AG04449 (cell line): ENCODE measurements at regions of chr15 and their contacts with region 1.

Region 1: GRCh38 chr15:39586387-39587171 is 5.7 kb downstream of the THBS1 start:
- DNase-seq: peak; percentile 63
- H3K4me3 ChIP-seq: peak overlapping the region; percentile 95
- CTCF ChIP-seq: no peak

Region 2: DNA sequence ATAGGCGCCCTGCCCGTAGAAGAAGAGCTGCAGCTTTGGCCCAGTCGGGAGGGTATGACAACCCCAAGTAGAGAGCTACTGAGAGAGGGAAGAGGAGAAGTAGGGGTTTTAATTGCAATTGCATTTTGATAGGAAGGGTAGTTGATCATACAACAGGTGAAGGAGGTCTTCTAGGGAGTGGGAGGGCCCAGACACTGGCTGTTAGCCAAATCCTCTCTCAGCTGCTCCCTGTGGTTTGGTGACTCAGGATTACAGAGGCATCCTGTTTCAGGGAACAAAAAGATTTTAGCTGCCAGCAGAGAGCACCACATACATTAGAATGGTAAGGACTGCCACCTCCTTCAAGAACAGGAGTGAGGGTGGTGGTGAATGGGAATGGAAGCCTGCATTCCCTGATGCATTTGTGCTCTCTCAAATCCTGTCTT is 414.6 kb before region 1 on chr15:
- CTCF ChIA-PET with region 1: interaction called, 9 read pairs
- POLR2A ChIA-PET with region 1: interaction called, 59 read pairs
- DNase-seq: peak; percentile 90
- H3K4me3 ChIP-seq: no peak overlapping the region
- CTCF ChIP-seq: peak; percentile 44

Region 3: DNA sequence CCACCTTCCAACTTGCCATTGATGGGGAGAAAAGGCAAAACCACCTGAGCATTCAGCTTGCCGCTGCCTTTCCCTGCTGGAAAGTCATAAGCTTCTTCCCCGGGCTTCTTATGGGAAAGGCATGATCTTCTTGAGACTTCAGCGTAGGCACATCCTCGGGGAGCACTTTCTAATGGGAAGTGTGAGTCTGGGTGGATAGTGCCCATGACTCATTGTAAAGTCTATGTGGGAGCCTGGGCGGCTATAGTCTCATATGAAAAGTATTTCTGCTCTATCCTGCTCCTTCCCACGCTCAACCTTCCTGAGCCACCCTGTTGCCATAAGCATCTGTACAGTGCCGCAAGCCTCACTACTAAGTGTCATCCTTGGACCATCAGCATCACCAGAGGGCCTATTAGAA is 315.6 kb before region 1 on chr15:
- CTCF ChIA-PET with region 1: no interaction called
- POLR2A ChIA-PET with region 1: interaction called, 40 read pairs
- DNase-seq: peak; percentile 97
- H3K4me3 ChIP-seq: no peak overlapping the region
- CTCF ChIP-seq: no peak

Region 4: GRCh38 chr15:39301589-39301999 is 285.0 kb before region 1 on chr15:
- CTCF ChIA-PET with region 1: interaction called, 51 read pairs
- POLR2A ChIA-PET with region 1: interaction called, 133 read pairs
- DNase-seq: peak; percentile 77
- H3K4me3 ChIP-seq: no peak overlapping the region
- CTCF ChIP-seq: no peak